Dendritic cell treated with granulocyte-macrophage colony-stimulating factor and Interleukin-4, amounts not matched to agents 40 ng/mL and 50 ng/mL, for 4 days (primary cell): ENCODE measurements at regions of chr13 and their contacts with region 1.

Region 1: GRCh38 chr13:39051157-39051556 is 12.9 kb downstream of the NHLRC3 start:
- H3K4me3 Mint-ChIP-seq: no peak overlapping the region
- H3K27ac Mint-ChIP-seq: no peak overlapping the region
- H3K4me1 Mint-ChIP-seq: peaks cover 12% of the 10 kb centered on the region
- H3K27me3 Mint-ChIP-seq: no peaks in the 10 kb centered on the region

Region 2: GRCh38 chr13:39263033-39263432 is 211.9 kb after region 1 on chr13:
- intact Hi-C with region 1: loop called (anchors 5 kb)
- H3K4me3 Mint-ChIP-seq: no peak overlapping the region
- H3K27ac Mint-ChIP-seq: no peak overlapping the region
- H3K4me1 Mint-ChIP-seq: no peaks in the 10 kb centered on the region
- H3K27me3 Mint-ChIP-seq: no peaks in the 10 kb centered on the region